Activated naive CD4-positive, alpha-beta T cell treated with anti-CD3 and anti-CD28 coated beads for 36 hours (primary cell): ENCODE measurements at regions of chr22 and their contacts with region 1.

Region 1: GRCh38 chr22:50562523-50563412 is at the start of gene SYCE3:
- DNase-seq: peak; percentile 98
- H3K4me3 Mint-ChIP-seq: peak within 1 kb of the TSS; percentile 85
- H3K27ac Mint-ChIP-seq: no peak within 1 kb of the TSS
- H3K4me1 Mint-ChIP-seq: peaks cover 13% of the 10 kb centered on the region
- H3K27me3 Mint-ChIP-seq: no peaks in the 10 kb centered on the region
- total RNA-seq, gene SYCE3: 0.91 to 2.0 TPM

Region 2: GRCh38 chr22:49657275-49657975 is 905.3 kb before region 1 on chr22:
- CTCF ChIA-PET with region 1: no interaction called
- intact Hi-C with region 1: no loop called
- DNase-seq: peak; percentile 91
- H3K4me3 Mint-ChIP-seq: peak overlapping the region; percentile 87
- H3K27ac Mint-ChIP-seq: peak overlapping the region; percentile 79
- H3K4me1 Mint-ChIP-seq: peaks cover 41% of the 10 kb centered on the region
- H3K27me3 Mint-ChIP-seq: no peaks in the 10 kb centered on the region

Region 3: GRCh38 chr22:50303848-50304527 is 258.8 kb before region 1 on chr22:
- CTCF ChIA-PET with region 1: no interaction called
- intact Hi-C with region 1: no loop called
- DNase-seq: no peak
- H3K4me3 Mint-ChIP-seq: no peak overlapping the region
- H3K27ac Mint-ChIP-seq: no peak overlapping the region
- H3K4me1 Mint-ChIP-seq: peaks cover 6% of the 10 kb centered on the region
- H3K27me3 Mint-ChIP-seq: peaks cover 18% of the 10 kb centered on the region

Region 4: GRCh38 chr22:50507991-50508884 is 54.5 kb before region 1 on chr22 and contains the start of gene NCAPH2:
- CTCF ChIA-PET with region 1: interaction called, 3 read pairs
- intact Hi-C with region 1: loop called (anchors 1 kb)
- DNase-seq: peak; percentile 98
- H3K4me3 Mint-ChIP-seq: peak within 1 kb of the TSS; percentile 96
- H3K27ac Mint-ChIP-seq: peak within 1 kb of the TSS; percentile 96
- H3K4me1 Mint-ChIP-seq: peaks cover 30% of the 10 kb centered on the region
- H3K27me3 Mint-ChIP-seq: no peaks in the 10 kb centered on the region
- total RNA-seq, gene NCAPH2: 104 to 115 TPM

Region 5: GRCh38 chr22:50530877-50531545 is 31.8 kb before region 1 on chr22:
- CTCF ChIA-PET with region 1: interaction called, 15 read pairs
- intact Hi-C with region 1: loop called (anchors 1 kb)
- DNase-seq: peak; percentile 88
- H3K4me3 Mint-ChIP-seq: peak overlapping the region; percentile 92
- H3K27ac Mint-ChIP-seq: peak overlapping the region; percentile 99
- H3K4me1 Mint-ChIP-seq: peaks cover 47% of the 10 kb centered on the region
- H3K27me3 Mint-ChIP-seq: no peaks in the 10 kb centered on the region

Region 6: GRCh38 chr22:50537765-50538164 is 25.0 kb before region 1 on chr22:
- CTCF ChIA-PET with region 1: interaction called, 12 read pairs
- intact Hi-C with region 1: no loop called
- DNase-seq: no peak
- H3K4me3 Mint-ChIP-seq: no peak overlapping the region
- H3K27ac Mint-ChIP-seq: peak overlapping the region; percentile 98
- H3K4me1 Mint-ChIP-seq: peaks cover 77% of the 10 kb centered on the region
- H3K27me3 Mint-ChIP-seq: no peaks in the 10 kb centered on the region

Region 7: DNA sequence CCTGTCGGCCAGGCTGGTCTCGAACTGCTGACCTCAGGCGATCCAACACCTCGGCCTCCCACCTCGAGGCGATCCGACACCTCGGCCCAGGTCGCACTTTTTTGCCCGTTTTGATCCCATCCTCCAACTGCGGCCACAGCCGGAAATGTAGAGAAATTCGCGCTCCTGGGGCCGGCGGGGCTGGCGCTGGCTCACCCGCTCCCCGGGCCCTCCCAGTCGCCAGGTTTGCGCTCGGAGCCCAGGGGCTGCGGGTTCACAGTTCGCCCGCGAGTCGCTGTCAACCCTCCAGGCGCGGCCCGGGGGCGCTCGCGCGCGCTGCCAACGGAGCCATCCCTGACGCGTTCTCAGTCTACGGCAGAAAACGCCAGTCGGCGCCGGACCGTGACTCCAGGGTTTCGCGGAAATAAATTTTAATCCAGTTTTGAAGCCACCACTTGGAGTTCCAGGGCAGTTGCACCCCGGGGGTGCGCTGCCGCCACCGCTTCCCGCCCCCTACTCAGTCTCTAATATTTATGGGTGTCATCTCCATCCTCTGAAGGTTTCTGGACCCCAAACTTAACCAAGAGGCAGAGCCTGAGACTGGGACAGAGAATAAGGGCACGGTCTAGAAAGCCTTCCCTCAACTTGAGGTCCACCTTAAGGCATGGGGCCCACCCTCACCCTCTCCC is 18.6 kb before region 1 on chr22:
- CTCF ChIA-PET with region 1: interaction called, 12 read pairs
- intact Hi-C with region 1: no loop called
- DNase-seq: peak; percentile 92
- H3K4me3 Mint-ChIP-seq: peak overlapping the region; percentile 62
- H3K27ac Mint-ChIP-seq: peak overlapping the region; percentile 72
- H3K4me1 Mint-ChIP-seq: peaks cover 60% of the 10 kb centered on the region
- H3K27me3 Mint-ChIP-seq: no peaks in the 10 kb centered on the region

Region 8: DNA sequence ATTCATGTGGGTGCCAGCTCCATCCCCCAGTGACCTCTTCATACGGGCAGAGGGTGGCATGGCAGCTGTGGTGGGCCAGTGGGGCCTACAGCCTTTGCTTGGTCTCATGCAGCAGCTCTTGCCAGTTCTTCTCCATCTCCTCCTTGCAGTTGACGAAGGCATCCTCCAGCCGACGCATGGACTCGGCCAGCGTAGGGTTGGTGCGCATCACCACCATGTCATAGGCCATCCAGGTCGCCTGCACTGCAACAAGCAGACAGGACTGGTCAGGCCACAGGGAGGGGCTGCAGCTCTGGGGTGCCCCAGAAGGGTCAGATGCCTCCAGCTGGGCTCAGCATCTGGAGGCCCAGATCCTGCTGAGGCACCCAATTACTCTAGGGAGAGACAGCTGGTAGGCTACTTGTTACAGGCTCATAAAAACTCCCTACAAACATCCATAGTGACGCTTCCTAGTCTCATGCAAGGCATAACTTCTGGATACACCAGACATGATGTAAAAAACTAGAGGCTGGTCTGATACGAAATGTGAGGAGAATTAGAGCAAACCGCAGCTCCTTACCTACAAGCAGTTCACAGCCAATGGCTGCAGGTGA is 11.5 kb before region 1 on chr22:
- CTCF ChIA-PET with region 1: interaction called, 13 read pairs
- intact Hi-C with region 1: no loop called
- DNase-seq: no peak
- H3K4me3 Mint-ChIP-seq: no peak overlapping the region
- H3K27ac Mint-ChIP-seq: no peak overlapping the region
- H3K4me1 Mint-ChIP-seq: peaks cover 17% of the 10 kb centered on the region
- H3K27me3 Mint-ChIP-seq: no peaks in the 10 kb centered on the region

Region 9: GRCh38 chr22:50582562-50583293 is 20.0 kb after region 1 on chr22 and contains the start of gene CHKB:
- CTCF ChIA-PET with region 1: interaction called, 4 read pairs
- intact Hi-C with region 1: loop called (anchors 1 kb)
- DNase-seq: peak; percentile 99
- H3K4me3 Mint-ChIP-seq: peak within 1 kb of the TSS; percentile 91
- H3K27ac Mint-ChIP-seq: peak within 1 kb of the TSS; percentile 82
- H3K4me1 Mint-ChIP-seq: peaks cover 31% of the 10 kb centered on the region
- H3K27me3 Mint-ChIP-seq: no peaks in the 10 kb centered on the region
- total RNA-seq, gene CHKB: 71.0 to 81.4 TPM

Region 10: DNA sequence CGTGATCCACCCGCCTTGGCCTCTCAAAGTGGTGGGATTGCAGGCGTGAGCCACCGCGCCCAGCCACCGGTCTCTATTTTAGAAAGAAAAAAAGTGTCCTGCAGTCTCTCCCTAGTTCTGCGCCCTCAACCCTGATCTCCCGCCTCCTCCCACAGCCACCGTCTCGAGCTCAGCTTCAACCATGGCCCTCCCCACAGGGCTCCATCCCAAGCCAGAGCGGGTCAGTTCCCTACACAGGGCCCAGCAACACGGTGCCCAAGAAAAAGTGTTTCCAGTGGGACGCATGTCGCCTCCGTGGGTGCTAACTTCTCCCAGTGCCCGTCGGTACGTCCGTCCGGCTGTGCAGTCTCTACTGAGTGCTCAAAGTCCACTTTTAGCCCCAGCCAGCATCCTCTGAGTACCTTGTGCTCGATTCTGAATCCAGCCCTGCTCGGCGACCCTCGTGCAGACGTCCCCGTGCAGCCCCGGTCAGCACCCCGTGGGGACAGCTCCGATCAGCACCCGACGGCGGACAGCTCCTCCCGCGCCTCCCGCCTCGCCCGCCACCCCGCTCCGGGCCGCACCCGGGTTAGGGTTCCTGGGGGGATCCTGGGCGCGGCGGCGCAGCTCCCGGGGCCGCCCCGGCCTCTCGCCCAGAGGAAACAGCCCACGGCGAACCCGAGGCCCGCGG is 37.2 kb after region 1 on chr22:
- CTCF ChIA-PET with region 1: no interaction called
- intact Hi-C with region 1: no loop called
- DNase-seq: peak; percentile 73
- H3K4me3 Mint-ChIP-seq: peak overlapping the region; percentile 40
- H3K27ac Mint-ChIP-seq: no peak overlapping the region
- H3K4me1 Mint-ChIP-seq: peaks cover 7% of the 10 kb centered on the region
- H3K27me3 Mint-ChIP-seq: peaks cover 27% of the 10 kb centered on the region

Region 11: GRCh38 chr22:50691521-50691920 is 128.8 kb after region 1 on chr22:
- CTCF ChIA-PET with region 1: no interaction called
- intact Hi-C with region 1: no loop called
- DNase-seq: peak; percentile 75
- H3K4me3 Mint-ChIP-seq: no peak overlapping the region
- H3K27ac Mint-ChIP-seq: no peak overlapping the region
- H3K4me1 Mint-ChIP-seq: peaks cover 4% of the 10 kb centered on the region
- H3K27me3 Mint-ChIP-seq: peaks cover 3% of the 10 kb centered on the region